Prostate gland (tissue), 2 donors: ENCODE measurements at regions of chr11 and their contacts with region 1.

Region 1: GRCh38 chr11:69463181-69463994 is 18.1 kb upstream of the LINC01488 start:
- DNase-seq: no peak
- H3K4me3 ChIP-seq: no peak overlapping the region
- H3K27ac ChIP-seq: no peak overlapping the region
- H3K4me1 ChIP-seq: no peaks in the 10 kb centered on the region
- H3K27me3 ChIP-seq: no peaks in the 10 kb centered on the region
- CTCF ChIP-seq: no peak
- POLR2A ChIP-seq: no peak

Region 2: DNA sequence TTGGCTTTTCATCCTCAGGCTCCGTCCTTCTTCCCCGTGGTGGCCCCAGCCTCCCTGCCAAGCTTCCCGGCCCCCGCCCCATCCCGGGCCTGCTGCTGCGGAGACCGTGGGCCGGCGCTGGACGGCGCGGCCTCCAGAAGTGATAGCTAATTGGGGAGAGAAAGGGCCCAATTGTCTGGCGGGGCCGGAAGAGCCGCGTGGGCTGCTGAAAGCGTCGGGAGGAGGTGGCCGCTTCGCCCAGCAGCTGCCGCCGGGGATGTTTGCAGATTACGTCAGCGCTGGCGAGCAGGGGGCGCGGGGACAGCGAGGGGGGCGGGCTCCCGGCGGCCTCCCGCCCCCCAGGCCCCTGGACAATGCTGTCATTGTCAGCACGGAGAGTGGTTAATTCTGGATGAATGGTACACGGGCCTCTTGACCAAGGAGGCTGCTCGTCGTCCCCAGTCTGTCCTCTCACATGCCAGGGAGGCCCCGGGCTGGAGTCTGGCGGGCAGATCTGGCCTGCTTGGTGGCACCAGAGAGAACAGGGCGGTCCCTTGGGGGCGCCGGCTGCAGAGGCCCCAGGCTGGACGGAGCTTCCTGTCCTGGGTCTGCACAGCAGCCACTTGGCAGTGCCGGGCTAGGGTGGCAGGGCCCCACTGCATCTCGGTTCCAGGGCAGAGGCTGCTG is 306.1 kb before region 1 on chr11:
- intact Hi-C with region 1: loop called (anchors 10 kb)
- DNase-seq: no peak
- H3K4me3 ChIP-seq: no peak overlapping the region
- H3K27ac ChIP-seq: no peak overlapping the region
- H3K4me1 ChIP-seq: no peaks in the 10 kb centered on the region
- H3K27me3 ChIP-seq: no peaks in the 10 kb centered on the region
- CTCF ChIP-seq: no peak
- POLR2A ChIP-seq: no peak

Region 3: DNA sequence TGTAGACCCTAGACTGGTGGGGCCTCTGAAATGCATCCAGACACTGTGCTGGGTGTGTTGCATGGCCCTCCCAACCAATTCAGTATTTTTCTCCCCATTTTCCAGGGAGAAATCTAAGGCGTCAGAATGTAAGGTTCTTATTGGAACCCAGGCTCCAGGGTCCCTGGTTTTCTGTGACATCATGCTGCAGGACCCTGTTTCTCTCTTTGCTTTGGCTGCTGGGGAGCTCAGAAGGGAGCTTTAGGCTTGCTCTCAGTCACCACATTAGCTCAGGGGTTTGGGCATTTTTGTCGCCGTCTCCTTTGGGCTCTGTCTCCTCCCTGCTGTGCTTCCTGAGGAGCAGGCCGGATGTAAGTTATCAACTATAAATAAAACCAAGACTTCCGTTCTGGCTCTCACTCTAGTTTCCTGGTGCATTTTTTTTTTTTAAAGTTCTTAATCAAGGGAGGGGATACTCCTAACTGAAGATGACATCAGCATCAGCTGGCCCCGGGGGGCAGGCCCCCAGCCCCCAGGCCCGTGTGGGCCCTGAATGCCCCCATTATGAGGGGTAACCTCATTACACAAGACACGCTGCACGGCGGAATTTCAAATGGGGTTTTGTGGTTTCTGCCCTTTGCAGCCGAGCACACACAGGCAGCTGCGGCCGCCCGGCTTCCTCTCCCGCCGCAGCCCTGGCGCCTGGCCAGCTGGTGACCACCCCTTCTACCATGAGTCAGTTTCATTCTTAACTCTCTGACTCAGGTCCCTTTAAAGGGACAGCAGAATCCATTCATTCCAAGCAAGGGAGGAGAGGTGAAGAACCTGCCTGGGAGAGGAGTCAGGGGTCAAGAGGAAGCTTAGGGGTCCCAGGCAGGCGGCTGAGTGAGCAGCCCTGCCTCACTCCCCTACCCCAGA is 166.2 kb before region 1 on chr11:
- intact Hi-C with region 1: loop called (anchors 10 kb)
- DNase-seq: peak; percentile 64
- H3K4me3 ChIP-seq: peak overlapping the region in 1 of 2 donors; percentile 8
- H3K27ac ChIP-seq: peak overlapping the region; percentile 13 to 30
- H3K4me1 ChIP-seq: no peaks in the 10 kb centered on the region
- H3K27me3 ChIP-seq: no peaks in the 10 kb centered on the region
- CTCF ChIP-seq: no peak
- POLR2A ChIP-seq: no peak

Region 4: GRCh38 chr11:69489036-69489747 is 25.8 kb after region 1 on chr11:
- intact Hi-C with region 1: no loop called
- DNase-seq: no peak
- H3K4me3 ChIP-seq: no peak overlapping the region
- H3K27ac ChIP-seq: no peak overlapping the region
- H3K4me1 ChIP-seq: no peaks in the 10 kb centered on the region
- H3K27me3 ChIP-seq: no peaks in the 10 kb centered on the region
- CTCF ChIP-seq: no peak
- POLR2A ChIP-seq: no peak